ENCODE measurements at regions of chr9 and their contacts with region 1.

Region 1: DNA sequence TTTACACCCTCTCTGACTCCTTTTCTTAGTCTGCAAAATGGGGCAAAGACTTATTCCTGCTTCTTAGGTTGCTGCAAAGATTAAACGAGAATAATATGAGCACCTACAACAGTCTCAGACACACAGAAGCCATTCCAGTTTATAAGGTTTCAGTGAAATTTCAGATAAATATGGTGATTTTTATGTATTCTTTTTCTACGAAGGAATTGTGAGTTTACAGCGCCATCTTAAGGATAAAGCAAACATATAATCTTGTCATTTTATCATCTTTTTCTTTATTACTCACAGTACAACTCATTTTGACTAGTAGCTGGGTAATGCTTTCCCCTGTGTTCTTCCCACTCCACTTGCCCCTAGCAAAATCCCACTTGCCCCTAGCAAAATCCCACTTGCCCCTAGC is 29.2 kb upstream of the SMC5 start:
- DNase-seq: no peak
- ATAC-seq: peak; percentile 56

Region 2: GRCh38 chr9:69971643-69972449 is 257.7 kb before region 1 on chr9:
- intact Hi-C with region 1: loop called (anchors 5 kb)
- DNase-seq: peak; percentile 79
- ATAC-seq: peak; percentile 81

Region 3: DNA sequence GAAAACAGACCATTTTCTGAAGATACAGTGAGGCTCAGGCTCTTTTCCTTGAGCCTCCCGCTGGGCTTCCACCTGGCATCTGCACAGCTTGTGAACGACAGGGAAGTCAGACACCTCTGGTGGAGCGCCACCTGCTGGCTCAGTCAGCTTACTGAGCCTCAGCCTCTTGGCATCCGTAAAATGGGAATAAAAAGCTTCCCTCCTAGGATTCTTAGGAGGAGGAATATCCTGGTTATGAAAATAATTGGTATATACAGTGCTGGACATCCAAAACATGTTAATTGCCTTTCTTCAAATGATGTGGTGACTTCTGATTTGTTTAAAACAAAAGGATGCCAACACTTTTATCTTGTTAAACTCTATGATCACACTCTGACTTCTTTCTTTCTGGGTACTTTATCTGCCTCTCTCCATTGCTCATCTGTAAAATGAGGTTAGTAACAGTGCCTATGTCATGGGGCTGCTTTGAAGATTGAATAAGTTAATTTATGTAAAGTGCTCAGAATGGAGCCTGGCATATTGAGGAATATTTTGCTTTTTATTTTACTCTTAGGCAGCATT is 118.5 kb before region 1 on chr9:
- intact Hi-C with region 1: loop called (anchors 5 kb)
- DNase-seq: peak; percentile 90
- ATAC-seq: peak; percentile 73

Region 4: DNA sequence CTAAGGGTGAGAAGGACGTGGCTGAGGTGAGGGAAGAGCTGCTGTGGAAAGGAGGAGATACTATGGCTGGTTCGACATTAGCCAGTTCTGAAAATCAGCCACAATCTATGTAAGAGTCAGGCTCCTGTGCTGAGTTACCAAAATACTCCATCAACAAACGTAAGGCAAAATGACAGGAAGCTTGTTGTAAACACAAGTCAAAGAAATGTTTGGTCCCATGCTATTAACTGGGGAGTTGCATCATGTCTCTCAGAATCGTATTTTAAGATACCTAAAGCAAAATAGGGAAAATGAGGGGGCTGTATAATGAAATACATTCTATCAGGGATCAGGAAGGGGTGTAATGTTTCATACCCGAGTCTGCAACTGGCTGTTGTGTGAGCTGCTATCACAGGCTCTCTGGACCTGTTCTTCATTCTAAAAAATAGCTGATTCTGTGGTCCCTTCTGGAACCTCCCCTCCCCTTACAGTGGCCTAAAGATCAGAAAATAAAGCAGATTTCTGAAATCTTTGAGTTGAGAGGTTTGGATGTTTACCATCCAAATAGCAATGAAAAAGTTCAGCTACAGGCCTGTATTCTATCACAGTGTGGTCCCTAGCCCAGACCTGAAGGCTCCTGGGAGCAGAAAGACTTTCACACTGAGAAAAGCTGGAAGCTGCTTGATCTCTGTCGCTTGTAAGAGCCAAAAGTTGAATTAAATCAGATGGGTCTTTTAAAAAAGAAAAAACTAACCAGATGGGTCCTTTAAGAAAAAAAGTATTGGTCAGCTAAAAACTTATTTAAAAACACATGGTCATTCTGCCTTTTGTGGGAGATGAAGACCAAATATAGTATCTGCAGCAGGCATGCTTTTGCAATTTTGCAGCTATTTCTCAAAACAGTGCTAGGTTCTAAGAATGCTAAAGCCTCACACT is 68.6 kb before region 1 on chr9:
- intact Hi-C with region 1: loop called (anchors 10 kb)
- DNase-seq: no peak
- ATAC-seq: peak; percentile 91

Measured in Right ventricle myocardium inferior (tissue), 1 donor.